Breast epithelium (tissue), 4 donors: ENCODE measurements at regions of chr6 and their contacts with region 1.

Region 1: GRCh38 chr6:31007694-31008093 is 2.6 kb upstream of the MUC22 start:
- DNase-seq: no peak
- H3K4me3 ChIP-seq: no peak overlapping the region
- H3K27ac ChIP-seq: peak overlapping the region; percentile 73 to 78
- H3K4me1 ChIP-seq: no peaks in the 10 kb centered on the region
- H3K27me3 ChIP-seq: no peaks in the 10 kb centered on the region
- CTCF ChIP-seq: no peak
- POLR2A ChIP-seq: no peak

Region 2: DNA sequence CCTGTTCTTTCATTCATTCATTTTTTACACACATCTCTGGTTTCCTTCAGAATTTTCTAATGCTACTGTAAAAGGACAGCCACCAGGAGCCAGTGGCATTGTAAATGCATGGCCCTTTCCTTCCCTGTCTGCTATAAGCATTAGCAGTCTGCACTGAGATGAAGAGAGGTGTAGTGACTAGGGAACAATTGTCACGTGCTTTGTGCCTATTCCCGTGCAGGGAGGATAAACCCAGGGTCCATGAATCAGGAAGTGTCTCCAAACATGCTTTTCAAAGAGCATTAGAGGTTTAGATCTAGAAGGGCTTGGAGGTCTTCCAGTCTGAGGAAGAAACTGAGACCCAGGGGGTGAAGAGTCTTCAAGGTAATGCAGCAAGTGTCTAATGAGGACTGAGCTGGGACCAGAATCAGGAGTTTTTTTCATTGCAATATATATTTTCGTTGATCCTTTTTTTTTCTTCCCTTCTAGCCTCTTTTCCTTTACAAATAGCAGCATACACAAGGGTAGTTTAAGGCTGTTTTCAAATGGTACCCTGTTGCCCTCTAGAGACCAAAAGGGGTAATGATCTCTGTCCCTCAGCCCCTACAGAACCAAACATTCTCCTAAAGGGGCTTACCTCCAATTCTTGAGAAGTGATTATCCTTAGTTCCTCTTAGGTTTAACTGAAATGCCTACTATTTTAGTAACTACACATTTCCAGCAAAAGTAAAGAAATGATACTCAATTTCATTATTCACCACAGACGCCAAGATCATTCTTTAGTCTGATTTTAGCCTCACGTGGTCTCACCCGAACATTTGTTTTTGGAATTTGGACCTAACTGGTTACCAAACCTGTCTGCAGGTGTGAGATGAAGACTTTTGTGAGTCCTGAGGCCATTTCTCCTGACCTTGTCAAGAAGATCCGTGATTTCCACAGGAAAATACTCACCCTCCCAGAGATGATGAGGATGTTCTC is 837.8 kb before region 1 on chr6:
- intact Hi-C with region 1: loop called (anchors 5 kb)
- DNase-seq: no peak
- H3K4me3 ChIP-seq: no peak overlapping the region
- H3K27ac ChIP-seq: no peak overlapping the region
- H3K4me1 ChIP-seq: peaks cover 0 to 4% of the 10 kb centered on the region in 2 donors
- H3K27me3 ChIP-seq: peaks cover 0 to 47% of the 10 kb centered on the region in 2 donors
- CTCF ChIP-seq: peak; percentile 49 to 74 (median 67)
- POLR2A ChIP-seq: no peak

Region 3: GRCh38 chr6:30707281-30707872 is 300.3 kb before region 1 on chr6:
- intact Hi-C with region 1: no loop called
- DNase-seq: no peak
- H3K4me3 ChIP-seq: no peak overlapping the region
- H3K27ac ChIP-seq: no peak overlapping the region
- H3K4me1 ChIP-seq: no peaks in the 10 kb centered on the region
- H3K27me3 ChIP-seq: no peaks in the 10 kb centered on the region
- CTCF ChIP-seq: no peak
- POLR2A ChIP-seq: no peak

Region 4: GRCh38 chr6:30821862-30822782 is 185.6 kb before region 1 on chr6:
- intact Hi-C with region 1: no loop called
- DNase-seq: no peak
- H3K4me3 ChIP-seq: no peak overlapping the region
- H3K27ac ChIP-seq: peak overlapping the region; percentile 50 to 71
- H3K4me1 ChIP-seq: no peaks in the 10 kb centered on the region
- H3K27me3 ChIP-seq: no peaks in the 10 kb centered on the region
- CTCF ChIP-seq: peak; percentile 44 to 54 (median 44)
- POLR2A ChIP-seq: no peak